HEK293 (cell line): ENCODE measurements at regions of chr11 and their contacts with region 1.

Region 1: DNA sequence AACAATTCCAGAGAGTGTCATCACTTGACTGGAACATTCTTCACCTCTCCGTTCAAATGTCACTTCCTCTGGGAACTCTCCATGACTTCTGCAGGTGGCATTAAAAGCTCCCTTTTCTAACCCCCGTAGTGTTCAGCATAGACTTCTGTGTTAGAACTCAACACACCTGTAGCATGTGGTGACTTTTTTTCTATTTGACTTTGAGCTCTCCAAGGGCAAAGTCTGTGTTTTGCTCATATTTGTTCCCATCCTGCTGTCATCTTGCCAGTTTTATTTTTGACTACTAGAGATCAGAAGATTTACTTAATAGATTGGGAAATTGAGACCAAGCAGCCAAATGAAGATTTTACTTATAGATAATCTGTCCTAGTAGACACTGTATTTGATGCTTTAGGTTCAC is 367.1 kb downstream of the INSC start:
- H3K4me3 ChIP-seq: no peak overlapping the region
- H3K27ac ChIP-seq: no peak overlapping the region
- H3K4me1 ChIP-seq: no peaks in the 10 kb centered on the region
- CTCF ChIP-seq: no peak

Region 2: DNA sequence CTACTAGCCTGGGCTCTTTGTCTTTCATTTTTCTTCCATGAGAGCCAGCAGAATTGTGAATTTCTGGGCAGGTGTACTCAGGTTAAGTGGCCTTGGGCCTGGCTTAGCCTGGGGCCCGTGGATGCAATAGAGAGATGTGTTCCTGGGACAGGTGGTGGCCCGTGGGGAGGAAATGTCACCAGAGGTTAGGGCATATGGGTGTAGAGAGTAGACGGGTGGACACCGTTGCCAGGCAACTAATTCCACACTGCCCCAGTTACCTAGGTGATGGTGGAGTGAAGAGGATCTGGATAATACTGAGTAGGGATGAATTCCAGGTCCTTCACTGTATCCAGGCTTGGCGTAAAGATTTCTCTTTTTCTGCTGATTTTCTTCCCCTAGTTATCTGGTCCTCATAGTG is 192.1 kb before region 1 on chr11:
- CTCF ChIA-PET with region 1: no interaction called
- POLR2A ChIA-PET with region 1: interaction called, 14 read pairs
- H3K4me3 ChIP-seq: no peak overlapping the region
- H3K27ac ChIP-seq: no peak overlapping the region
- H3K4me1 ChIP-seq: 0 out of 2 replicates have a peak, but pooled peaks cover 4% of the 10 kb centered on the region
- CTCF ChIP-seq: no peak